Kidney (tissue), 22 donors: ENCODE measurements at regions of chr3 and their contacts with region 1.

Region 1: DNA sequence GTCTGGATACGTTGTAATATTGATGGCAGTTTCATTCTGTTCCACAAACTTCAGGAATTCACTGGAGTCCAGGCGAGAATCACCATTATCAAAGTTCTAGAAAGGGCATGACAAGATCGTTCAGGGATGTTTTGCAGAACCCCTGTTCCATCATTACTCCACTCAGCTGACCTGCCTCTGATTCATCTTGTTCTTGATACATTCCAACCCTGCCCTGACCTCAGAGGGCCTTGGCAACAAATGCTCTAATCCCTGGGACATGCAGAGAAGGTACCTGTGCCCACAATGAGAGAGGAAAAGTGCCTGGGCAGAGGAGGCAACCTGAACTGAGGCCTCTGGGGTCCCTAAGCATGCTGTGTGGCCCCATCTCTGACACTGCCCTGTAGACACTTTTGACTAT is 45.9 kb downstream of the FSTL1 start:
- DNase-seq: no peak
- H3K4me3 ChIP-seq: no peak overlapping the region
- H3K27ac ChIP-seq: no peak overlapping the region
- H3K4me1 ChIP-seq: no peaks in the 10 kb centered on the region
- H3K27me3 ChIP-seq: no peaks in the 10 kb centered on the region
- CTCF ChIP-seq: no peak

Region 2: DNA sequence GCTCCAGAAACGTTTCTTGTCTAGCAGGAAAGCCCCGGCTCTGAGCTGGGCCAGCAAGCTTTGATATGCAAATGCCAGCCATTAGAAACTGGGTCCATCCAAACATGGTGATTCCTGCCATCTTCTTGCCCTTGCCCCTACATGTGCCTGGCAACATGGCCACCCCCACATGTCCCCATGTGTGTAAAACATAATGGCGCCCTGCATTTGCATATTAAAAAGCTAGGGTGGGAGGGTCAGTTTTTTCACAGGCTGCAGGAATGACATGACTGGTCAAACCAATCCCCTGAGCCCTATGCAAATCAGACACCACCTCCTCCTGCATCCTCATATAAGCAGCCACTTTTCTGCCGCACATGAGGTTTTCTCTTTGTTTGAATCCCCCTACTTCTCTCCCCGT is 141.1 kb before region 1 on chr3:
- intact Hi-C with region 1: loop called (anchors 10 kb)
- DNase-seq: no peak
- H3K4me3 ChIP-seq: no peak overlapping the region
- H3K27ac ChIP-seq: no peak overlapping the region
- H3K4me1 ChIP-seq: no peaks in the 10 kb centered on the region
- H3K27me3 ChIP-seq: no peaks in the 10 kb centered on the region
- CTCF ChIP-seq: no peak